ENCODE measurements at regions of chr1 and their contacts with region 1.

Region 1: DNA sequence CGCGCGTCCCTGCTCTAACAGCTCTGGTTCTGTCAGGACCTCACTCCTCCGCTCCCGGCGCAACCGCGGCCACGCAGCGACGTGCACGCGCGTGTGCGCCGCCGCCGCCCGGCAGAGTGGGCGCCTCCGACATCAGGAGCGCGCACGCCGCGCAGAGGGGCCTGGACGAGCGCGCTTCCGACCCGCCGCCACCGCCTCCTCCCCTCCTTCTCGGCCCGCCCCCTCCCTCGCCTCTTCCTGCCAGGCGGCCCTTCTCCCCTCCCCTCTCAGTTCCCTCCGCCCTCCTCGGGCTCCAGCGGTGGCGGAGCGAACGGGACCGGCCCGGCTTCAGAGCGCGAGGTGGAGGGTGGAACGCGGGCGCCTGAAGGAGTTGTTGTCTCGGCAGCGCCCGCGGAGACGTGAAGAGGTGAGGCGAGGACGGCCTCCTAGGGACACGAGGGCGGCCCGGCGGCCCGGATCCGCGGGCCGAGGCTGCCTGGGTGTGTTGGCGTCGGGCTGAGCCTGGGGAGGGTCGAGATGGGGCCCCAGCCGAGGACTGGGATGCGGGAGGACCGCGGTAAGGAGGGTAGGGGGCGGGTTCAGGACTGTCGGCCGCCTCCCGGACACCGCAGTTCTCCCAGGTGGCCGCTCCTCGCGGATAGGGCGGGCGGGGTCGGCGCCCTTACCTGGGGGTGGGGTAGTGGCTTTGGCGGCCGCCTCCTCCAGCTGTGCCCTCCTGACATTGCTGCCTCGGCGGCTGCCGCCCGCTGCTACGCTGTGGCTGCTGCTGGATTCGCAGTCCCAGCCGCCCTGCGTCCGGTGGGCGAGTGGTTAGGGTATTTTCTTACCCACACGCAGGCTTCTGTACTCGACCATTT is at the start of gene RABGAP1L:
- DNase-seq: peak; percentile 81 to 91
- H3K4me3 ChIP-seq: peak within 1 kb of the TSS; percentile 75 to 90 (median 84)
- H3K27ac ChIP-seq: peak within 1 kb of the TSS; percentile 89 to 94
- H3K4me1 ChIP-seq: no peaks in the 10 kb centered on the region
- H3K27me3 ChIP-seq: no peaks in the 10 kb centered on the region
- CTCF ChIP-seq: no peak
- POLR2A ChIP-seq: peak; percentile 45
- total RNA-seq, gene RABGAP1L: 41.3 to 83.7 (median 49.5) TPM

Region 2: GRCh38 chr1:173702736-173703135 is 456.7 kb before region 1 on chr1:
- intact Hi-C with region 1: loop called (anchors 5 kb)
- DNase-seq: no peak
- H3K4me3 ChIP-seq: no peak overlapping the region
- H3K27ac ChIP-seq: no peak overlapping the region
- H3K4me1 ChIP-seq: no peaks in the 10 kb centered on the region
- H3K27me3 ChIP-seq: no peaks in the 10 kb centered on the region
- CTCF ChIP-seq: no peak
- POLR2A ChIP-seq: no peak

Region 3: GRCh38 chr1:174116042-174116441 is 43.4 kb before region 1 on chr1:
- intact Hi-C with region 1: no loop called
- DNase-seq: no peak
- H3K4me3 ChIP-seq: no peak overlapping the region
- H3K27ac ChIP-seq: no peak overlapping the region
- H3K4me1 ChIP-seq: no peaks in the 10 kb centered on the region
- H3K27me3 ChIP-seq: no peaks in the 10 kb centered on the region
- CTCF ChIP-seq: no peak
- POLR2A ChIP-seq: no peak

Measured in breast epithelium (tissue), 4 donors.